ENCODE measurements at regions of chr20 and their contacts with region 1.

Region 1: DNA sequence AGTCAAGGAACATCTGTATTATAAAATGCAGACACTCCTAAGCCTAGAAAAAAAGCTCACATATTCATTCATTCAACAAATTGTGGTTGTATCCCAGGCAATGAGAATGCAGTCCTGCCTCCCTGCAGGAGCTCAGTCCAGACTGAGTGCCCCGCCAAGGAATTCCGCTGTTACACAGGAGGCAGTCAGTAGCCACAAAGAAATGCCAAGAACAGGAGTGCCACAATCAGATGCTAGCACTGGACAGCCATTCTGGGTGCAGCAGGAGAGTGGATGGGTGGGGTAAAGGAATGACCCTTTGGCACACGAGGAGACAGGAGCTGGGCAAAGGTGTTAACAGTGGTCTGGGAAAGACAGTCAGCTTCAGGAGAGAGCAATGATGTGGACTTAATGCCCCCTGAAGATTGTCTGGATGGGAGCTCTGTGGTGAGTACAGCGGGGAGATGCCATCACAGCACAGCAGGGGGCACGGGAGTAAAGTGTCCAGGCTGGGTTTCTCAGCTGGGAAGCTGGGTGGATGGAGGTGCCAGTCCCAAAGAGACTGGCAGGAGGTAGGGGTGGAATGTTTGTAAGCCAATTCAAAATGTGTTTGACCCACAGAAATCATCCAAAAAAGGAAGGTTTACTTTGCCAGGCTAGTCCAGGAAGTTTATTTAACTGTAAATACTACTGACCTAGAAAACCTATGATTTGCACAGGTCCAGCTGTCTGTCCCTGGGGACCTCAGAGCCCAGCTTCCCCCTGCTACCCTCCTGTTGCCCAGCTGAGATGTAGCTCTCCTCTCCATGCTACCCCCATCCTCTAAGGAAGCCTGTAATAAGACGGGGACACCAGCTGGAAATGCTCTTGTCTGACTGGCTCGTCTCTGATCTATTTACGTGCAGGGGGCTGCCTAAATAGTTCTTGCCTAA is 84.1 kb downstream of the SLC23A2 start:
- DNase-seq: no peak
- ATAC-seq: no peak
- H3K4me3 Mint-ChIP-seq: no peak overlapping the region
- H3K27ac Mint-ChIP-seq: peak overlapping the region; percentile 2
- H3K4me1 Mint-ChIP-seq: peaks cover 38% of the 10 kb centered on the region
- H3K27me3 Mint-ChIP-seq: no peaks in the 10 kb centered on the region
- CTCF ChIP-seq: no peak

Region 2: DNA sequence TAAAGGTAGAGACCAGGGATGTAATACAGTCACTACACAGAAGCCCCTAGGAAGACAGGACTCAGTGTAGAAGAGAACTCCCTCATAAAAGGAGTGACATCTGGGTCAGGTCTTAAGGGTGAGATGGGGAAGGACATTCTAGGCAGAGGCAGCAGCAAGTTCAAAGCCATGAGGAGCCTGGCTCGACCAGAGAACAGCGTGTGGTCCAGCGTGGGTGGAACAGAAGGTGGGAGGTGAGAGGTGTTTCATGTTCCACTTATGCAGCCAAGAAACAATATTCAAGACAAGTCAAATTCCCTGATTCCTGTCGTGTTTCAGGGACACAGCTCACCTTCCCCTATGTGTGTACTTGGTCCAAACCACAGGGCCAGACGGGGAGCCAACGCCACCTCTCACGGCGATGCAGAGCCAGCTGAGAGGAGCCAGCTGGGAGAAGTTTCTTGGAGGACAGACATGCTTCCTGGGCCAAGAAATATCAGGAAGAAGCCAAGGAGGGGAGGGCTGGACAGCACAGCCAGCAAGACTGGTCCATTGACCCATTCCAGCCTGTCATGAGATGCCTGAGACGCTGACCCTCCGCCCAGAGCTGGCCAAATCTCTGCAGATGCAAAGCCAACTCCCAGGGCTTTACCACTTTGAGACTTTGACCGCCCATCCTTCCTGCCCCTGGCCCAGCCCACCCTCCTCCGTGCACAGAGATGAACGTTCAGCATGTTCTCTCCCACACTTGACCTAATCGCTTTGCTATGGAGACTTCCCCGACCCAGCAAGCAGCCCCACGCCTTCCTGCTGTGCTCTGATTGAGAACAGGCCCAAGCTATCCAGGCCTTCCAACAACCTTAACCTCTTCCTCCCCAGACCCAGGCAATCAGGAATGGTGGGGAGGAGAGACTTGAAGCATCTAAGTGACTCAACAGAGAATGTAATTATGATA is 81.7 kb before region 1 on chr20:
- CTCF ChIA-PET with region 1: no interaction called
- POLR2A ChIA-PET with region 1: no interaction called
- intact Hi-C with region 1: no loop called
- DNase-seq: no peak
- ATAC-seq: no peak
- H3K4me3 Mint-ChIP-seq: no peak overlapping the region
- H3K27ac Mint-ChIP-seq: no peak overlapping the region
- H3K4me1 Mint-ChIP-seq: peaks cover 4% of the 10 kb centered on the region
- H3K27me3 Mint-ChIP-seq: no peaks in the 10 kb centered on the region
- CTCF ChIP-seq: no peak

Region 3: GRCh38 chr20:4875578-4876067 is 41.6 kb before region 1 on chr20:
- CTCF ChIA-PET with region 1: no interaction called
- POLR2A ChIA-PET with region 1: no interaction called
- intact Hi-C with region 1: loop called (anchors 5 kb)
- DNase-seq: no peak
- ATAC-seq: peak; percentile 75
- H3K4me3 Mint-ChIP-seq: peak overlapping the region; percentile 44
- H3K27ac Mint-ChIP-seq: peak overlapping the region; percentile 60
- H3K4me1 Mint-ChIP-seq: peaks cover 12% of the 10 kb centered on the region
- H3K27me3 Mint-ChIP-seq: no peaks in the 10 kb centered on the region
- CTCF ChIP-seq: no peak

Region 4: DNA sequence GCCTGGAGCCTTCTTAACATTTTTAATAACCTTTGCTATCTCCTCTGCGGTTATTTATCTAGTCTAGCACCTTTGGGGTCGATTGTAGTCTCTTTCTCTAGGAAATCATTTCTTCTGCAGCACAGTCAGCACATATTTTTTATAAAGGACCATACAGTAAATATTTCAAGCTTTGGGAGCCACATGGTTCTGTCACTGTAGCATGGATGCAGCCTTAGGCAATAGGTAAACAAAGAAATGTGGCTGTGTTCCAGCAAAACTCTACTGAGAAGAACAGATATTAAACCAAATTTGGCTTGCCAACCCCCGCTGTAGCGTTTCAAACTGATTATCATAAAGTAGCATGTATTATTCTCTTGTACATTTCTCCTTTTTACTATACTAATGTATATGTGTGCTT is 11.6 kb before region 1 on chr20:
- CTCF ChIA-PET with region 1: interaction called, 4 read pairs
- POLR2A ChIA-PET with region 1: interaction called, 11 read pairs
- intact Hi-C with region 1: no loop called
- DNase-seq: no peak
- ATAC-seq: no peak
- H3K4me3 Mint-ChIP-seq: no peak overlapping the region
- H3K27ac Mint-ChIP-seq: no peak overlapping the region
- H3K4me1 Mint-ChIP-seq: no peaks in the 10 kb centered on the region
- H3K27me3 Mint-ChIP-seq: no peaks in the 10 kb centered on the region
- CTCF ChIP-seq: no peak

Region 5: DNA sequence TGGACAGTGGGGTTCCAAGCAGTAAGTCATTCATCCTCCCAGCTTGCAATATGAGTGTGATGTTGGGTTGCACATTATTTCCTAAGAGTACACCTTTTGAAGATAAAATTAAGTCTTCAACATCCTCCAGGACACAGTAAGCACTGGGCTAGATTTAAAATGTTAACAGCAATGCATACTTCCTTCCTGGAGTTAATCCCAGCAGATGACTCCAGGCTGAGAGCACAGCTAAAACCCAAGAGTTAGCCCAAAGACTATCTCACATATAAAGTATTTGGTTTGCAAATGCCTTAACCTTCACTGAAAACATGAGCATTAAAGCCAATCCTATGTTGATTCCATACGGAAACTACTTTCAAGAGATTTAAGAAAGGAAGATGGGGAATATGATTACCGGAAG is 14.8 kb after region 1 on chr20:
- CTCF ChIA-PET with region 1: no interaction called
- POLR2A ChIA-PET with region 1: interaction called, 3 read pairs
- intact Hi-C with region 1: loop called (anchors 2 kb)
- DNase-seq: no peak
- ATAC-seq: no peak
- H3K4me3 Mint-ChIP-seq: no peak overlapping the region
- H3K27ac Mint-ChIP-seq: no peak overlapping the region
- H3K4me1 Mint-ChIP-seq: peaks cover 21% of the 10 kb centered on the region
- H3K27me3 Mint-ChIP-seq: no peaks in the 10 kb centered on the region
- CTCF ChIP-seq: no peak

Region 6: DNA sequence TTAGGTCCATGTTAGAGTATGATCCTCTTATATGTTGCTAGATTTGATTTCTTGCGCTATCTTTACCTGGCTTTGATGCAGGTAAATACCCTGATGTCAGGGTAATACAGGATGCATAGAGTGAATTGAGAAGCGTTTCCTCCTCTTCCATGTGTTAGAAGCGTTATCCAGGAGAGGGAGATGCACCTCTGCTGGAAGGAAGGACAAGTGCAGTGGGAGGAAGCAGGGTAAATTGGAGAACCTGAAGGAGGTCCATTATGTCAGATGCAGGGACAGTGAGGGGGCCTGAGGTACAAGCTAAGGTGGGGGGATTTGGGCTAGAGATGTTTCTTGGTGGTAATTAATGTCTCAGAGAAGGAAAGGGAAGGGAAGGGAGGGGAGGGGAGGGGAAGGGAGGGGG is 840.7 kb after region 1 on chr20:
- CTCF ChIA-PET with region 1: no interaction called
- POLR2A ChIA-PET with region 1: no interaction called
- intact Hi-C with region 1: no loop called
- DNase-seq: no peak
- ATAC-seq: no peak
- H3K4me3 Mint-ChIP-seq: no peak overlapping the region
- H3K27ac Mint-ChIP-seq: no peak overlapping the region
- H3K4me1 Mint-ChIP-seq: peaks cover 31% of the 10 kb centered on the region
- H3K27me3 Mint-ChIP-seq: no peaks in the 10 kb centered on the region
- CTCF ChIP-seq: no peak